Right cardiac atrium (tissue), 5 donors: ENCODE measurements at regions of chr17 and their contacts with region 1.

Region 1: GRCh38 chr17:32783602-32784001 is 93.3 kb downstream of the MYO1D start:
- DNase-seq: no peak
- ATAC-seq: peak in 1 of 2 donors; percentile 46
- H3K4me3 ChIP-seq: no peak overlapping the region
- H3K27ac ChIP-seq: no peak overlapping the region
- H3K4me1 ChIP-seq: no peaks in the 10 kb centered on the region
- H3K27me3 ChIP-seq: no peaks in the 10 kb centered on the region

Region 2: GRCh38 chr17:32741381-32741780 is 42.2 kb before region 1 on chr17:
- intact Hi-C with region 1: no loop called
- DNase-seq: no peak
- ATAC-seq: no peak
- H3K4me3 ChIP-seq: no peak overlapping the region
- H3K27ac ChIP-seq: no peak overlapping the region
- H3K4me1 ChIP-seq: no peaks in the 10 kb centered on the region
- H3K27me3 ChIP-seq: no peaks in the 10 kb centered on the region

Region 3: DNA sequence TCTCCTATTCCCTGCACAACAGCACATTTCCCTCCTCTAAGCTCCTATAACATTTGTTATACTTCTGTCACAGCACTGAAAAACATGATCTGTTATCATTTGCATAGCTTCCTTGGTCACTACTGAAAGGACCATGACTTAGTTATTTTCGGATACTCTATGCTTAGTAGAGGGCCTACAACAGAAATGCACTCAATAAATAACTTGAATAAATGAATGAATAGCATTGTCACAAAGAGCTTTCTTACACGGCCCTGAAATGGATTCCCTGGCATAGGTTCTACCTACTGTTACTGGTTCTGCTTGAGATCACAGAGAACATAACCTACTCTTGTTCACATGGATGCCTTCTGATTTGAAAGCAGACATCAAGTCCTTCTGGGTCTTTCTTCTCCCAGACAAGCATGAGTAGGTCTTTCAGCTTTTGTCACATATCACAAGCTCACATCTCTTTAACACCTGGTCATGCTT is 51.7 kb after region 1 on chr17:
- intact Hi-C with region 1: no loop called
- DNase-seq: no peak
- ATAC-seq: no peak
- H3K4me3 ChIP-seq: no peak overlapping the region
- H3K27ac ChIP-seq: no peak overlapping the region
- H3K4me1 ChIP-seq: peaks cover 1% of the 10 kb centered on the region
- H3K27me3 ChIP-seq: no peaks in the 10 kb centered on the region

Region 4: GRCh38 chr17:32877164-32877764 is 93.7 kb after region 1 on chr17:
- intact Hi-C with region 1: loop called in 3 of 4 experiments (anchors 2 to 10 kb)
- DNase-seq: peak; percentile 92 to 98 (median 97)
- ATAC-seq: peak; percentile 99
- H3K4me3 ChIP-seq: peak overlapping the region; percentile 91
- H3K27ac ChIP-seq: peak overlapping the region; percentile 80
- H3K4me1 ChIP-seq: no peaks in the 10 kb centered on the region
- H3K27me3 ChIP-seq: no peaks in the 10 kb centered on the region

Region 5: GRCh38 chr17:32909787-32910369 is 126.3 kb after region 1 on chr17:
- intact Hi-C with region 1: loop called in 3 of 4 experiments (anchors 2 to 10 kb)
- DNase-seq: peak; percentile 59 to 65 (median 64)
- ATAC-seq: peak; percentile 73 to 83
- H3K4me3 ChIP-seq: no peak overlapping the region
- H3K27ac ChIP-seq: no peak overlapping the region
- H3K4me1 ChIP-seq: no peaks in the 10 kb centered on the region
- H3K27me3 ChIP-seq: no peaks in the 10 kb centered on the region

Region 6: DNA sequence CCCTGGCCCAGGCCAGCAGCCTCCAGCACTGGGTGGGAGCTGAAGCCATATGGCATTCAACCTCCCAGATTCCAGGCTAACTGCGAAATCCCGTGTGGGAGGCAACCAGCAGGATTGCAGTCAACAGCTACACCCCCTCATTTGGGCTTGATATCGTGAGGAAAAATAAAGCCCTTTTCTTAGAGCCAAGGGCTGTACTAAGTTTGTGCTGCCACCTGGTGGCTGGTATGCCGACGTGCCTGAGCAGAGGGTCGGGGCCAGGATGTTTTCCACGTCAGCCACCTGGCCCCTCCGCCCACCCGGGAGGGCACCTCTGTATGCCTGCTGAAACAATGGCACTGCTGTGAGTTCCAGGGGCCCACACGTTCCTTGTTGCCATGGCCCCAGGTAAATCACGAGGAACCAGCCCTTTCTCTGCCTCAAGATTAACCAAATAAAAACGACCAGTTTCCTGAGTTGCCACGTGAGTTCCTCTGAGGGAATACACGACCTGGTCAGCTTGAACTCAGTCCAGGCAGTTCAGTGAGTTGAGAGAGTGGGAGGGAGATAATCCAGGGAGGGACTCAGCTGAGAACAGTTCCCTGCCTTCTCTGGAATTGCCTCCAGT is 153.4 kb after region 1 on chr17:
- intact Hi-C with region 1: loop called in 2 of 4 experiments (anchors 5 kb)
- DNase-seq: peak; percentile 78 to 92 (median 85)
- ATAC-seq: peak; percentile 79 to 86
- H3K4me3 ChIP-seq: no peak overlapping the region
- H3K27ac ChIP-seq: no peak overlapping the region
- H3K4me1 ChIP-seq: no peaks in the 10 kb centered on the region
- H3K27me3 ChIP-seq: no peaks in the 10 kb centered on the region

Region 7: DNA sequence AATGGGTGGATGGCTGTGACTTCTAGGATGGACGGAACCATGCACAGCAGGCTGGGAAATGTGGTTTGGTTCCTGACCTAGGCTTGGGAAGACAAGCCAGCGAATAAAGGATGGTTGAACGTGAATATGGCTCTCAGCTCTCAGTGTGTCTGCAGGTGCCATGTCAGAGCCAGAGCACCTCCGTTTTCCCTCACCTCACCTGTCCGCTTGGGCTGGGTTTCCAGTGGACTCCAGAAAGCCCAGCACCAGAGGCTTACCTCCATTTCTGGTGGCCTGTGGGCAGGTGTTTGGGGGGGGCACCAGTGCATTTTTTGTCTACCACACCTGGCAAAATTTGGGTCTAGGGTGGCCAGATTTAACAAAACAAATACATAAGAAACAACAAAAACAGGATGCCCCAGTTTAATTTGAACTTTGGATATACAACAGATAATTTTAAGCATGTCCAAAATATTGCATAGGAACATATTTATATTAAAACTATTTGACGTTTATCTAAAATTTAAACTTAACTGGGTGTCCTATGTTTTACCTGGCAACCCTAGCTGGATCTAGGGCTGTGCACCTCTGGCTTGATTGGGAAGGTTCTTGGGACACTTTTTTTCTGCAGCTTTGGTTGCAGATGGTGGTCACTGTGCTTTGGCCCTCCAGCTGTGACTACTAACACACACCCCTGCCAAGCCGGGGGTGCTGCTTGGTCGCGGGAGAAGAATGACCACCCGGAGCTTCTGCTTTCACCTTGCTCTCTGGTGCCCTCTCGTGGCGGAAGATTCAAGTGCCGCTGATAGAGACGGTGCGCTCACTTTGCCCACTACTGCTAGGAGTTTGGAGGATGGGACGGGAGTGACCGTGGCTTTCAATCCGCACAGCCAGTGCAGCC is 214.4 kb after region 1 on chr17:
- intact Hi-C with region 1: loop called in 1 of 4 experiments (anchors 5 kb)
- DNase-seq: peak; percentile 75 to 90 (median 84)
- ATAC-seq: peak; percentile 68 to 80
- H3K4me3 ChIP-seq: no peak overlapping the region
- H3K27ac ChIP-seq: no peak overlapping the region
- H3K4me1 ChIP-seq: no peaks in the 10 kb centered on the region
- H3K27me3 ChIP-seq: no peaks in the 10 kb centered on the region